PC-9 (cell line): ENCODE measurements at regions of chr2 and their contacts with region 1.

Region 1: DNA sequence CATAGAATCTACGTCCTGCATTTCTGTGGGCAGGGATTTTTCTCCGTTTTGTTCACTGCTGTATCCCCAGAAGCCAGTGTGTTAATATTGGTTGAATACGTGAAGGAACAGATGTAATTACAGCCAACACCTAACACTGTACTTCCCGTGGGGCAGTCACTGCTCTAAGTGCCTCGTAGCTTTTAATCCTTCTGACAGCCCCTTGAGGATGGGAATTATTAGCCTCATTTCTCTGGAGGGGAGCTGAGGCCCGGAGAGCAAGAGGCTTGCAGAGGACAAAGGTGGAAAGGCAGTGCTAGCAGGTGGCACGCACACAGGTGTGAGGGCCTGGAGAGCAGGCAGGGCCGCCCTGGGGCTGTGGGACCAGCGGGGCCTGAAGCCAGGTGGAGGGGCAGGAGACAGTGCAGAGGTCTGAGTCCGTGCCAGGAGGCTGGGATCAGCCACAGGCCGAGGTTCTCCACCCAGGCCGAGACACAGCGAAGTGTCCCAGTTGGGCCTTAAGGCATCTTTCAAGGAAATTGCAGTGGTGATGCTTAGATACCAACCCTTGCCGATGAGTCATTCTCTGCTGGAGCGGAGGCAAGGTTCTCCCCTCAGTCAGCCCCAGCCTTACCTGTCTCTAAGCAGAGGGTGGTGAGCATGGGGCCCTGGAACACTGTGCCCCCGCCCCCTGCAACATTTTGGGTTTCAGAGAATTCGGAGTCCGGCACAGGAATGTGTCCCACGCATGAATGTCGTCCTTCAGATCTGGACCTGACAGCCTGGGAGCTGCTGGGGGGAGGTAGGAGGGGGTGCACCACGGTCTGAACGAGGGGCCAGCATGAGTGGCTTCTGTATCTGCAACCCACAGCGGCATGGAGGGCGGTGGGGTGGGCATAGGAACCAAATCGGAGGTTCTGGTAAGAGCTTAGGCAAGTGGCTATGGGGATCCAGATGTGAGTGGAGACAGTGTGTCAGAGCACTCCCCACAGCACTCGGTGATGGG is 122.6 kb downstream of the GBX2 start:
- DNase-seq: peak; percentile 91 to 95
- H3K4me3 ChIP-seq: no peak overlapping the region
- H3K27ac ChIP-seq: peak overlapping the region; percentile 44
- H3K4me1 ChIP-seq: peaks cover 36% of the 10 kb centered on the region
- H3K27me3 ChIP-seq: no peaks in the 10 kb centered on the region
- CTCF ChIP-seq: no peak

Region 2: DNA sequence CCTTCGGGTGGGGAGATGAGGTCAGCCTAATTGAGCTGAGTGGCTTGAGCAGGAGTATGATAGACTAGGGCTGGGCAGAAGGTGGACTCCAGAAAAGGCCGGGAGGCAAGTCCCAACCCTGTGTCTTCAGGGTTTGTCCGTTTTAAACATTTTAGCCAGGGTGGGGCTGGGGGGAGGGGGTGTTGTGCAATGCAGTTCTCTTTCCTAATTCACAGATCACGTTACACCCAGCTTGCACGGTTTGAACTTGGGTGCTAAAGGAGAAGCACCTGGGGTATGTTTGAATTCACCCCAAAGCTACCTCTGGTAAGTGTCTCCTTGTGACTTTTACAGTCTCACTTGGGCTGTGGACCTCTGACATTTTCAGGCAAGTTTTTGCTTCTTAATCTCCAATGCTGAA is 318.4 kb before region 1 on chr2:
- CTCF ChIA-PET with region 1: no interaction called
- POLR2A ChIA-PET with region 1: no interaction called
- intact Hi-C with region 1: no loop called
- DNase-seq: peak; percentile 25 to 69
- H3K4me3 ChIP-seq: no peak overlapping the region; the same call in 1 of the 2 replicates
- H3K27ac ChIP-seq: peak overlapping the region; percentile 56
- H3K4me1 ChIP-seq: peaks cover 34% of the 10 kb centered on the region
- H3K27me3 ChIP-seq: no peaks in the 10 kb centered on the region
- CTCF ChIP-seq: no peak

Region 3: GRCh38 chr2:236078675-236079255 is 33.2 kb after region 1 on chr2:
- CTCF ChIA-PET with region 1: no interaction called
- POLR2A ChIA-PET with region 1: no interaction called
- intact Hi-C with region 1: loop called (anchors 2 kb)
- DNase-seq: no peak
- H3K4me3 ChIP-seq: no peak overlapping the region
- H3K27ac ChIP-seq: peak overlapping the region; percentile 67
- H3K4me1 ChIP-seq: peaks cover 17% of the 10 kb centered on the region
- H3K27me3 ChIP-seq: no peaks in the 10 kb centered on the region
- CTCF ChIP-seq: no peak